ENCODE measurements at regions of chr4 and their contacts with region 1.

Region 1: DNA sequence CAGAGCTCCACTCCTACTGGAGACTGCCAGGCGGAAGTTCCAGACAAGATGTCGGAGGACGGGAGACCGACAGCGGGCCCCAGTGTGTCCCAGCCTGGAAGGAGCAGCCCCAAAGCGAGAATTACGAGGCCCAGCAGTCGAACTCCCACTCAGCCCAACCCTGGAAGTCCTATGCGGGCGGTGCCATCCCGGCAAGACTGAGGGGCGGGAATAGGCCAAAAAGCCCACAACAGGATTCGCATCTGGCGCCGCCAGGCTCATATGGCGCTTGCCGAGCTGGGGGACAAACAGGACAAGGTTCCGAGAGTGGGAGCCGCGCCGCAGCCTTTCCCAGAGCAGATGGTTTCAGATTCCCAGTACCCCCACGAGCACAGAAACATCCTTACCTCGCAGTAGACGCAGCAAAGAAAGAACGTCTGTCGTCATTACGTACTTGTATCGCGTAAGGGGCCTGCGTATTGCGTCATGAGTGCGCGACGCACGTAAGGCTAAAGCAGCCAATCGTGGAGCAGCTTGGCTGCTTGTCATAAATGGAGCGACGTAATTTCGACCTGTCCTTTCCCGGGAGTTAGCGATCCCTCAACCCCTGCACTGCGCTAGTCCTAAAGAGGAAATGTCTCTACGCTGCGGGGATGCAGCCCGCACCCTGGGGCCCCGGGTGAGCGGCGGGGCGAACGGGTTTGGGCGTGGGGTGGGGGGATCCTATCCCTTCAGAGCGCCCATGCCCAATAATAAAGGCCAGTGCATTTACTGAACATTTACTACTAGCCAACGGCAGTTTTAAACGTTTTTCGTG is at the starts of genes LIAS and RPL9:
- DNase-seq: peak; percentile 93
- H3K4me3 Mint-ChIP-seq: peak within 1 kb of the TSS; percentile 95
- H3K27ac Mint-ChIP-seq: peak within 1 kb of the TSS; percentile 98
- H3K4me1 Mint-ChIP-seq: peaks cover 23% of the 10 kb centered on the region
- H3K27me3 Mint-ChIP-seq: no peaks in the 10 kb centered on the region
- total RNA-seq, gene LIAS: 19.1 and 19.8 TPM in 2 replicates
- total RNA-seq, gene RPL9: 1,761 and 1,779 TPM in 2 replicates

Region 2: DNA sequence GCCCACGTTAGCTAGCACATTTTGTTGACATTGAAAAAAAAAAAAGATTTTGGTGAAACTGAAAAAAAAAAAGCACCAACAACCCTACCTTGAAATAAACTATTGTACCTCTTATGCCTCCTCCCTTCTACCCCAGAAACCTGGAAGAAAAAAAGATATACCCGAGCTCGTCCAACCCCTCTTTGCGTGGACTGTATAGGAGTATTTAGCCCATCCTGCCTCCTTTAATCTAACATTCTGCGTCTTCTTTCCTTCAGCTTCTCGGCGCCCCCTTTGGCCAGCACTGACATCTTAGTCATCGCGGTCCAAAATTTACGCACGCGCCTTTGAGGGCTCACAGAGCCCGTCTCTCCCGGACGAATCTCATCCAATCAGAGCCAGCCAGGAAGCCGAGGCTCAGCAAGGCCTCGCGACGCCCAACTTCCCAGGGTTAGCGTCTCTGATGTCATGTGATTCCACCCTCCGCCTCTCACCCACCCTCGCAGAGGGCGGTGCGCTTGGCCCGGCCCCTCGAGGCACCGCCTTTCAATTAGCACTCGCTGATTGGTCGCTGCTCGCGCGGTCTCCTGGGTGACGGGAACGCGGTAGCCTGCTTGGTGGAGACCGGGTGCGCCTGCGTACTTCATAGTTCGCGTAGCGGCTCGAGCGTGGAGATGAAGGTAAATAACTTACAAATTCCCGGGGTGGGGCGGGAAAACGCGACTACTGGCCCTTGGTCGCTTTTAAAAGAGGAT is 276.6 kb before region 1 on chr4 and contains the start of gene WDR19:
- intact Hi-C with region 1: loop called (anchors 1 kb)
- DNase-seq: peak; percentile 99
- H3K4me3 Mint-ChIP-seq: no peak within 1 kb of the TSS
- H3K27ac Mint-ChIP-seq: no peak within 1 kb of the TSS
- H3K4me1 Mint-ChIP-seq: peaks cover 9% of the 10 kb centered on the region
- H3K27me3 Mint-ChIP-seq: peaks cover 7% of the 10 kb centered on the region
- total RNA-seq, gene WDR19: 8.9 and 10.5 TPM in 2 replicates

Region 3: GRCh38 chr4:39365830-39366771 is 92.6 kb before region 1 on chr4 and contains the start of gene RFC1:
- intact Hi-C with region 1: loop called (anchors 2 kb)
- DNase-seq: peak; percentile 89
- H3K4me3 Mint-ChIP-seq: peak within 1 kb of the TSS; percentile 90
- H3K27ac Mint-ChIP-seq: peak within 1 kb of the TSS; percentile 86
- H3K4me1 Mint-ChIP-seq: peaks cover 31% of the 10 kb centered on the region
- H3K27me3 Mint-ChIP-seq: peaks cover 1% of the 10 kb centered on the region
- total RNA-seq, gene RFC1: 56.6 and 64.7 TPM in 2 replicates

Region 4: DNA sequence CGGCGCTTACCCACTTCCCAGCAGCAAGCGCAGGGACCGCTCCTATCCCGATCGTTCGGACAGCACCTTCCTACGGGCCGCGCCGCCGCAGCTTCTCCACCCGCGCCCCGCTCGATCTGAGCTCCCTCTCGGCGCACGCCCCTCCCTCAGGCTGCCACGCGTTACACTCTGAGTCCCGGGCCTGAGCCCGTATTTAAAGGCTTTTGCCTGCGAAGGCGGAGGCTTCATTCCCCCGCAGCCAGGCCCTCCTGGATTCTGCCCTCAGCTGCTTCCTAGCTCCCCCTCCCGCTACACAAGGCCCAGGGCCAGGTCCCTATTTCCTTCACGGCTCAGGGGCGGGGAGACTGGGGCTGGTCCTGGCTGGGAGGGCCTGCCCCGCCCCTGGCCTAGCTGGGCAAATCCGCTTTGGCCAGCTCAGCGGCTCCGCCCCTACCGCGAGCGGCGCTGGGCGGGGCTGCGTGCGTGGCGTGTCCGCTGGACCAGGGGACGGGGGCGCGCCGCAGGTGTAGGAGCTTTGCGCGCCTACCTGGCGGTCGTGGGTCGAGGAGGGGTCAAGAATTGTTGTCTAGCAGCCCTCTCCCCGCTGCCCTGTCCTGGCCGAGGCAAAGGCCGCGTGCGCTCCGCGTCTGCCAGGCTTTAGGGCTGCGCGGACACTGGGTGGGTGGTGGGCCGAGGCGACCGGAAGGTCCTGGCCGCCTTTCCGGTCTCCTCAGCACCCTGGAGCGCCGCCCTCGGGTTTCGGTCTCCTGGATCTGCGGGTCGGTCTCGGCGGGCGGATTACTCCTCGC is 68.8 kb after region 1 on chr4 and contains the start of gene UGDH:
- intact Hi-C with region 1: loop called (anchors 5 kb)
- DNase-seq: peak; percentile 90
- H3K4me3 Mint-ChIP-seq: peak within 1 kb of the TSS; percentile 98
- H3K27ac Mint-ChIP-seq: peak within 1 kb of the TSS; percentile 94
- H3K4me1 Mint-ChIP-seq: peaks cover 16% of the 10 kb centered on the region
- H3K27me3 Mint-ChIP-seq: no peaks in the 10 kb centered on the region
- total RNA-seq, gene UGDH: 34.8 and 40.1 TPM in 2 replicates

Region 5: GRCh38 chr4:39713691-39714090 is 255.0 kb after region 1 on chr4:
- intact Hi-C with region 1: no loop called
- DNase-seq: no peak
- H3K4me3 Mint-ChIP-seq: no peak overlapping the region
- H3K27ac Mint-ChIP-seq: no peak overlapping the region
- H3K4me1 Mint-ChIP-seq: peaks cover 35% of the 10 kb centered on the region
- H3K27me3 Mint-ChIP-seq: no peaks in the 10 kb centered on the region